Activated CD4-positive, alpha-beta memory T cell treated with anti-CD3 and anti-CD28 coated beads, Interleukin-2, amount 10 ng/mL, durations not matched to agents 7 days and 5 days (primary cell): ENCODE measurements at regions of chr7 and their contacts with region 1.

Region 1: GRCh38 chr7:37448636-37449361 is at the start of gene ELMO1:
- DNase-seq: peak; percentile 86
- H3K4me3 Mint-ChIP-seq: peak within 1 kb of the TSS; percentile 90
- H3K27ac Mint-ChIP-seq: peak within 1 kb of the TSS; percentile 90
- H3K4me1 Mint-ChIP-seq: peaks cover 60% of the 10 kb centered on the region
- H3K27me3 Mint-ChIP-seq: peaks cover 3% of the 10 kb centered on the region
- total RNA-seq, gene ELMO1: 100 to 102 TPM

Region 2: GRCh38 chr7:37234928-37235327 is 213.9 kb before region 1 on chr7:
- CTCF ChIA-PET with region 1: interaction called, 13 read pairs
- POLR2A ChIA-PET with region 1: interaction called, 4 read pairs
- DNase-seq: no peak
- H3K4me3 Mint-ChIP-seq: no peak overlapping the region
- H3K27ac Mint-ChIP-seq: no peak overlapping the region
- H3K4me1 Mint-ChIP-seq: peaks cover 11% of the 10 kb centered on the region
- H3K27me3 Mint-ChIP-seq: no peaks in the 10 kb centered on the region

Region 3: DNA sequence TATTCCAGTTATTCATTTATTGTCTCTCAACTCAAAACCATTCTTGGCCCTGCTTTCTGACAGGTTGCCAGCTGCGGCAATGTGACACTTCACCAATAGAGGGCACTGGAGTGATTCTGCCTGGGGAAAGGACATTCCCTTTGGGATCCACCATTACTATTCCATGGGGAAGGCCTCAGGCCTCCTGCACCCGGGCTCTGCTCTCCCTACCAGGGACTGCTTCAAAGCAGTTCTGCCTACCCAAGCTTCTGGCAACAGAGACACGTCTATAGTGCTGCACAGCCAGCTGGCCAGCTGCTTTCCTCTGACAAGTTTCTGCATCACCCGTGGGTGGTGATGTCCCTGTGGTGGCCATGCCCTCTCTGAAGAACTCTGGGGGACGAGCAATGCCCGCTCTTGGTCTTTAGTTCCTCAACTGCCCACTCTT is 164.0 kb before region 1 on chr7:
- CTCF ChIA-PET with region 1: interaction called, 7 read pairs
- POLR2A ChIA-PET with region 1: interaction called, 11 read pairs
- DNase-seq: peak; percentile 42
- H3K4me3 Mint-ChIP-seq: no peak overlapping the region
- H3K27ac Mint-ChIP-seq: no peak overlapping the region
- H3K4me1 Mint-ChIP-seq: peaks cover 37% of the 10 kb centered on the region
- H3K27me3 Mint-ChIP-seq: no peaks in the 10 kb centered on the region

Region 4: DNA sequence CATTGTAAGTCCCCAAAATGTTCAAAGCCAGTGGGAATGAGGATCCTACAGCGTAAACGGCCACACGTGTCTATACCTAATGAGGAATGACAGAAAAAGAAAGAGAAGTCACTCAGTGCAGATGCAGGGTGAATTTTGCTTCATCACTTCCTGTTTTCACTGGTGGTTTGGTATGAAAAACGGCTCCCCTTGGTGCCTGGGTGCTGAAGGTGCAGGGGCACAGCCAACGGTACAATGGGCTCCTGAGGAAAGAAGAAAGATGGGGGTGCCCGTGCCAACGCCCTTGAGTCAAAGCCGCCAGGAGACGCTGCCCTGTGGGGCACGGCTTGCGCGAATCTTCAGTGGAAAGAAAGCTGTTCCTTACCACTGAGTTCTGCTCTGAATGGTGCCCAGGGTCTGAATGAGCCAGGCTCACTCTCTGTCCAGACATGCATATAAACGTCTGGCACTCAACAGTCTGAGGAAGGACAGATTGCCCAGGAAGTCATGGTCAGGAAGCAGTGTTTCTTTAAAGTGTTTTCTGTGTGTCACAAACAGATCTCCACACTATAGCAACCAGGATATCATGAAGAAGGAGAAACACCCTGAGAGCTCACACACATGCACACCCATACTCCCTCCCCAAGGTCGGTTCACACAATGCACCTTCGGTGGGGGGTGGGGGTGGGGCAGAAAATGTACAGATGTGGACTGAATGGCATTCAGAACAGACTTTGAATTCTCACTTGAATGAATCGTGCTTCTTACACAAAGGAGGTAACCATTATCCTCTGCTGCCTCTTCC is 105.9 kb before region 1 on chr7:
- CTCF ChIA-PET with region 1: interaction called, 12 read pairs
- POLR2A ChIA-PET with region 1: interaction called, 11 read pairs
- DNase-seq: peak; percentile 78
- H3K4me3 Mint-ChIP-seq: peak overlapping the region; percentile 91
- H3K27ac Mint-ChIP-seq: peak overlapping the region; percentile 98
- H3K4me1 Mint-ChIP-seq: peaks cover 65% of the 10 kb centered on the region
- H3K27me3 Mint-ChIP-seq: no peaks in the 10 kb centered on the region

Region 5: GRCh38 chr7:37408291-37409228 is 40.2 kb before region 1 on chr7:
- CTCF ChIA-PET with region 1: interaction called, 32 read pairs
- POLR2A ChIA-PET with region 1: interaction called, 18 read pairs
- DNase-seq: peak; percentile 30
- H3K4me3 Mint-ChIP-seq: peak overlapping the region; percentile 73
- H3K27ac Mint-ChIP-seq: peak overlapping the region; percentile 82
- H3K4me1 Mint-ChIP-seq: peaks cover 54% of the 10 kb centered on the region
- H3K27me3 Mint-ChIP-seq: no peaks in the 10 kb centered on the region

Region 6: GRCh38 chr7:37495574-37496184 is 46.9 kb after region 1 on chr7:
- CTCF ChIA-PET with region 1: interaction called, 10 read pairs
- POLR2A ChIA-PET with region 1: no interaction called
- DNase-seq: no peak
- H3K4me3 Mint-ChIP-seq: no peak overlapping the region
- H3K27ac Mint-ChIP-seq: no peak overlapping the region
- H3K4me1 Mint-ChIP-seq: peaks cover 7% of the 10 kb centered on the region
- H3K27me3 Mint-ChIP-seq: no peaks in the 10 kb centered on the region